Panc1 (cell line): ENCODE measurements at regions of chr18 and their contacts with region 1.

Region 1: GRCh38 chr18:48022531-48023329 is 92.3 kb upstream of the SMAD2 start:
- DNase-seq: no peak
- ATAC-seq: peak; percentile 85
- H3K4me3 ChIP-seq: no peak overlapping the region
- H3K27ac ChIP-seq: no peak overlapping the region
- H3K4me1 ChIP-seq: no peaks in the 10 kb centered on the region
- H3K27me3 ChIP-seq: no peaks in the 10 kb centered on the region
- CTCF ChIP-seq: peak; percentile 60

Region 2: GRCh38 chr18:47772374-47773248 is 250.1 kb before region 1 on chr18:
- CTCF ChIA-PET with region 1: no interaction called
- POLR2A ChIA-PET with region 1: no interaction called
- in situ Hi-C with region 1: no loop called
- intact Hi-C with region 1: loop called (anchors 2 kb)
- DNase-seq: peak; percentile 46
- ATAC-seq: peak; percentile 82
- H3K4me3 ChIP-seq: no peak overlapping the region
- H3K27ac ChIP-seq: no peak overlapping the region
- H3K4me1 ChIP-seq: no peaks in the 10 kb centered on the region
- H3K27me3 ChIP-seq: no peaks in the 10 kb centered on the region
- CTCF ChIP-seq: peak; percentile 81